OCI-LY7 (cell line): ENCODE measurements at regions of chr13 and their contacts with region 1.

Region 1: GRCh38 chr13:105247830-105248229 is 1287.6 kb downstream of the EFNB2 start:
- DNase-seq: no peak
- H3K4me3 ChIP-seq: no peak overlapping the region
- H3K27ac ChIP-seq: no peak overlapping the region
- H3K4me1 ChIP-seq: no peaks in the 10 kb centered on the region
- CTCF ChIP-seq: no peak

Region 2: GRCh38 chr13:104847922-104848321 is 399.9 kb before region 1 on chr13:
- CTCF ChIA-PET with region 1: no interaction called
- POLR2A ChIA-PET with region 1: interaction called, 14 read pairs
- intact Hi-C with region 1: no loop called
- DNase-seq: no peak
- H3K4me3 ChIP-seq: no peak overlapping the region
- H3K27ac ChIP-seq: no peak overlapping the region
- H3K4me1 ChIP-seq: no peaks in the 10 kb centered on the region
- CTCF ChIP-seq: no peak

Region 3: DNA sequence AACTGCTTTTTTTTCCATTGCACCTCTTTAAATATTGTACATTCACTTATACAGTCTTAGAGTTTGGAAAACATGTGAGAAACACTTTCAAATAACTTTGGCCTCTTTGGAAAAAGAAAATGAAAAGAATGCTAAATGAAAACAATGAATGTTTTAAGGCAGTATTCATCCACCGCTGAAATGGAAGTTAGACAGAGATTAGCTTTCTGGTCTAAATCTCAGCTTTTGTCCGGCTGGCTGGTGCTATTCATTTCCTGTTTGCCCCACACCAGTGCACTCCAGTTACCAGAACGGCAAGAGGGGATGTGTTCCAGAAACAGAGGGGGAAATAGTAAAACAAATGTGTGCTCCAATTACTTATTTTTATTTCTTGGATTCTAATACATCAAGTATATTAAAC is 86.4 kb after region 1 on chr13:
- CTCF ChIA-PET with region 1: no interaction called
- POLR2A ChIA-PET with region 1: no interaction called
- intact Hi-C with region 1: no loop called
- DNase-seq: no peak
- H3K4me3 ChIP-seq: no peak overlapping the region
- H3K27ac ChIP-seq: no peak overlapping the region
- H3K4me1 ChIP-seq: no peaks in the 10 kb centered on the region
- CTCF ChIP-seq: no peak